ENCODE measurements at regions of chr1 and their contacts with region 1.

Region 1: GRCh38 chr1:154198756-154199562 is 7.1 kb upstream of the TPM3 start:
- DNase-seq: peak; percentile 80
- H3K4me3 Mint-ChIP-seq: no peak overlapping the region
- H3K27ac Mint-ChIP-seq: no peak overlapping the region
- H3K4me1 Mint-ChIP-seq: peaks cover 12% of the 10 kb centered on the region
- H3K27me3 Mint-ChIP-seq: no peaks in the 10 kb centered on the region
- CTCF ChIP-seq: peak; percentile 45

Region 2: DNA sequence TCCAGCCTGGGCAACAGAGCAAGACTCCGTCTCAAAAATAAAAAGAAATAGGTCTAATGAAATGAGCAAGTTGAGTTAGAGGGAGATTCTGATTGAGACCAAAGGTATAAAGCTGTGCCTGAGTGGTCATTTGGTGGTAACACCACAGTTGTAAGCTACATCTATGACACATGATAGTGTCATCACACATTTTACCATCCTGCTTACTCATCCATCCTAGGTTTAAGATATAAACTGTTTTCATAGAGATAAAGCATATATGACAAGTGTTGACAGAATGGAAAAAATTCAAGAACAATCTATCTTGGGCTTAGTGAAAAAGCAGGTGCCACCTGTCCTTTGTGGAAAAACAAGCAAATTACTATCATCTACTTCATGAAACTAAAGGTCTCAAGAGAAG is 14.3 kb after region 1 on chr1:
- CTCF ChIA-PET with region 1: interaction called, 29 read pairs
- POLR2A ChIA-PET with region 1: interaction called, 167 read pairs
- intact Hi-C with region 1: no loop called
- DNase-seq: no peak
- H3K4me3 Mint-ChIP-seq: no peak overlapping the region
- H3K27ac Mint-ChIP-seq: no peak overlapping the region
- H3K4me1 Mint-ChIP-seq: peaks cover 12% of the 10 kb centered on the region
- H3K27me3 Mint-ChIP-seq: no peaks in the 10 kb centered on the region
- CTCF ChIP-seq: no peak

Region 3: DNA sequence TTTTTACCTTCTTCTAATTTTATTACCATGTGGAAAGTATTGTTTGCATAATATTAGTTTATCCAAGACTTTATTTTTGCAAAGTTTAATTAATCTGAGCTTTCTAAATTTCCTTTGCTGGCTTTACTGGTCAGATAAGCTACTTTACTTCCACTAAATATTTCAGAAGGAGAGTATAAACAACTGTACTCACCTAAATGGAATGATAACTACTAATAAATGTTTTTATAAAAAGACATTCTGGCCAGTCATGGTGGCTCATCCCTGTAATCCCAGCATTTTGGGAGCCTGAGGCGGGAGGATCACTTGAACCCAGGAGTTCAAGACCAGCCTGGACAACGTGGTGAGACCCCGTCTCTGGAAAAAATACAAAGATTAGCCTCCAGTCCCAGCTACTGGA is 162.4 kb after region 1 on chr1:
- CTCF ChIA-PET with region 1: no interaction called
- POLR2A ChIA-PET with region 1: no interaction called
- intact Hi-C with region 1: no loop called
- DNase-seq: no peak
- H3K4me3 Mint-ChIP-seq: no peak overlapping the region
- H3K27ac Mint-ChIP-seq: no peak overlapping the region
- H3K4me1 Mint-ChIP-seq: no peaks in the 10 kb centered on the region
- H3K27me3 Mint-ChIP-seq: no peaks in the 10 kb centered on the region
- CTCF ChIP-seq: no peak

Region 4: DNA sequence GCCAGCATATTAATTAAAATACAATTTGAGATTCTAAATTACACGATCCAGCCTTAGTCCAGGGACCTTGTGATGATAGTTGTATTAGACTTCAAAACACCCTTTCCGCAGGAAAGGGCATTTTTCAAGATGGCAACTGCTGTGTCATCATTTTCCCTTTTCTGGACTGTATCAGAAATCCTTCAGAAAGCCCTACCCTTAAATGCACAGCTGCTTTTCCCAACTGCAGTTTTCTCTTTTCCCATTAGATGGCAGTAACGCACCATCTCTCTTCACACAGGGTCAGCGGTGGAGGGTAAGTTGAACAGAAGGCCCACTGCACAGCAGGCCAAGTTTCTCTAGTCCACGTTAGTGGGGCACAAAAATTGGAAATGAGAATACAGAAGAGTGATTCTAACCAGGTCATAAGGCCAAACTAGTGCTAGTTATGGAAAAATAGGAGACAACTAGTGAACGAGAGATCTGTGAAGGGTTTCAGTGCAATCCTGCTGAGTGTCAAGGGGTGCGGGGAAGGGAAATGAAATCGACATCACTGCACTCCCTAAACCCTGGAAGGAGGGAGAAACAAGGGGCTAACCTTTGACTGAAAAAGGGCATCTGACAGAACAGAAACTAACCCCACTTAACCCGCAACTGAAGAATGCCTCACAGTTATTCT is 280.9 kb after region 1 on chr1:
- CTCF ChIA-PET with region 1: no interaction called
- POLR2A ChIA-PET with region 1: no interaction called
- intact Hi-C with region 1: no loop called
- DNase-seq: peak; percentile 92
- H3K4me3 Mint-ChIP-seq: no peak overlapping the region
- H3K27ac Mint-ChIP-seq: no peak overlapping the region
- H3K4me1 Mint-ChIP-seq: peaks cover 23% of the 10 kb centered on the region
- H3K27me3 Mint-ChIP-seq: no peaks in the 10 kb centered on the region
- CTCF ChIP-seq: peak; percentile 98

Measured in MCF 10A (cell line).